ENCODE measurements at regions of chr6 and their contacts with region 1.

Region 1: DNA sequence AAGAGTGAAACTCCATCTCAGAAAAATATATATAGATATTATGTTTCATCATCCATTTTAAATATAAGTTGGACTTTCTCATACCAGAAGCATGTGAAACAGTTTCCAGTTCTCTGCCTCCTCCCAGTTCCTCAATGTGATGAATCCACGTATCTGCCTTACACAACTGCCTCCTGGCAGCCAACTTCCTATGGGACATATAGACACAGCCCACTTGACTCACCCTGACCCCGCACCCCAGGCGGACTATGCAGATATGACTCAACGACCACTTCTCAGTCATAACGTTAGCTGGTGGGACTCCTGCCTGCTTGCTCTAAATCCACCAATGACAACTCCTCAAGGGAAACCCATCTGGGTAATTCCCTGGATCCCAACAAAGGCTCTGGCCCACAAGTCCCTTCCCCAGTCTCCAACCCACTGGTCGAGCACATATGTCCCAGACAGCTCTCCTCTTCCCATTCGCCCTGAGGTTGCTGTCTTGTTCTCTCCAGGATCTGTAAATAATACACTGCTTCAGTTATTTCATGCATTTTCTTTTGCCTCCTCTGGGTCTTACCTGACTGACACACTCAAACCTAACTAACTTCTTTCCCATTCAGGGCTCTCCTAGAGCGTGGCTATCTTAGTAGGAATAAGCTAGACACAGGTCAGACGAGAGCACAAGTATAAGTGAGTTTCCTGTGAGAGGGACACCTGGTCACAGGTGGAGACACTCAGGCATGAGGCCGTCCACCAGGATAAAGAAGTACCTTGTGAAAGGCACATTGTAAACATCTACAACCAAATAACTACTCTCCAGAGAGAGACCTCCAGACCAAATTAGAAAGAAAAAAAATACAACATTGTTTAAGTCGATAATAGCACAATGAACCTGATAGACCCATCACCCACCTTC is 548.5 kb downstream of the CD83 start:
- DNase-seq: peak in 1 of 9 experiments; percentile 45
- ATAC-seq: no peak
- H3K4me3 ChIP-seq: no peak overlapping the region
- H3K4me3 Mint-ChIP-seq: no peak overlapping the region
- H3K27ac ChIP-seq: no peak overlapping the region
- H3K27ac Mint-ChIP-seq: no peak overlapping the region
- H3K4me1 ChIP-seq: peaks cover 24% of the 10 kb centered on the region
- H3K4me1 Mint-ChIP-seq: peaks cover 22% of the 10 kb centered on the region
- H3K27me3 ChIP-seq: no peaks in the 10 kb centered on the region
- H3K27me3 Mint-ChIP-seq: no peaks in the 10 kb centered on the region
- CTCF ChIP-seq: no peak

Region 2: GRCh38 chr6:14524319-14524718 is 141.8 kb before region 1 on chr6:
- CTCF ChIA-PET with region 1: no interaction called
- POLR2A ChIA-PET with region 1: no interaction called
- intact Hi-C with region 1: no loop called
- DNase-seq: no peak
- ATAC-seq: no peak
- H3K4me3 ChIP-seq: no peak overlapping the region
- H3K4me3 Mint-ChIP-seq: no peak overlapping the region
- H3K27ac ChIP-seq: no peak overlapping the region
- H3K27ac Mint-ChIP-seq: no peak overlapping the region
- H3K4me1 ChIP-seq: no peaks in the 10 kb centered on the region
- H3K4me1 Mint-ChIP-seq: no peaks in the 10 kb centered on the region
- H3K27me3 ChIP-seq: no peaks in the 10 kb centered on the region
- H3K27me3 Mint-ChIP-seq: no peaks in the 10 kb centered on the region
- CTCF ChIP-seq: no peak

Region 3: DNA sequence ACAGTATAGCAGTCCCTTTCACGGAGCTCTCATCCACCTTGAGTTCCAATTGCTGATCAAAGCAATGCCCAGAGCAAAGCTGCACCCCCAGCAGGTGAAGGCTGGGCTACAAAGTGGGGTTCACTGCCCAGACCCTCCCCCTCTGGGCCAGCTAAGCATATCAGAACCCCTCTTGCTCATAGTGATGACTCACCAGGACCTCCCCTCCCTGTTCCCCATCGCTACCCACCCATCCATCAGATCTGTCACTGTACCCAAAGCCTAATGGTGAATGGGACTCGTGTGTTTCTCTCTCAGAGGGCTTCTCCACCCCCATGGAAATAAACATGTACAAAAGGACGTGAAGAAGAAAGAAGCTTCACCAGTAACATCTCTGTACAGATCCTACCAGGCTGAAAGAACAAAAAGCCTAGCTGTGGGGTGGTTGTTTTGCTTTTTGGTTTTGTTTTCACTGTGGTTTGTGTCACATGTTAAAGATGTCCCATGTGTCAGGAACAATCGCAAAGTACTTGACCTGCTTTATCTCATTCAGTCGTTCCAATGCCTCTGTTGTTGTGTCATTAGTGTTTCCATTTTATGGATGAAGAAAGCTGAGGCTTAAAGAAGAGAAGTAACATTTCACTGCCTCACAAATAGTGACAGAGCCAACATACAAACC is 30.0 kb before region 1 on chr6:
- CTCF ChIA-PET with region 1: no interaction called
- POLR2A ChIA-PET with region 1: interaction called, 5 read pairs
- intact Hi-C with region 1: loop called in 1 of 2 experiments (anchors 1 kb)
- DNase-seq: peak in 3 of 9 experiments; percentile 21 to 61 (median 47)
- ATAC-seq: peak; percentile 51
- H3K4me3 ChIP-seq: no peak overlapping the region
- H3K4me3 Mint-ChIP-seq: peak overlapping the region; percentile 73
- H3K27ac ChIP-seq: no peak overlapping the region
- H3K27ac Mint-ChIP-seq: peak overlapping the region; percentile 91
- H3K4me1 ChIP-seq: peaks cover 37% of the 10 kb centered on the region
- H3K4me1 Mint-ChIP-seq: peaks cover 53% of the 10 kb centered on the region
- H3K27me3 ChIP-seq: no peaks in the 10 kb centered on the region
- H3K27me3 Mint-ChIP-seq: peaks cover 2% of the 10 kb centered on the region
- CTCF ChIP-seq: no peak